Endothelial cell of umbilical vein (primary cell): ENCODE measurements at regions of chr16 and their contacts with region 1.

Region 1: GRCh38 chr16:3938848-3939624 is 58.5 kb upstream of the CREBBP start:
- DNase-seq: peak; percentile 55
- H3K4me3 ChIP-seq: peak overlapping the region in 1 of 3 experiments; percentile 29
- H3K27ac ChIP-seq: no peak overlapping the region
- H3K4me1 ChIP-seq: peaks cover 3% of the 10 kb centered on the region
- H3K27me3 ChIP-seq: peaks cover 0 to 2% of the 10 kb centered on the region in 2 experiments
- CTCF ChIP-seq: peak; percentile 90 to 97
- POLR2A ChIP-seq: no peak

Region 2: DNA sequence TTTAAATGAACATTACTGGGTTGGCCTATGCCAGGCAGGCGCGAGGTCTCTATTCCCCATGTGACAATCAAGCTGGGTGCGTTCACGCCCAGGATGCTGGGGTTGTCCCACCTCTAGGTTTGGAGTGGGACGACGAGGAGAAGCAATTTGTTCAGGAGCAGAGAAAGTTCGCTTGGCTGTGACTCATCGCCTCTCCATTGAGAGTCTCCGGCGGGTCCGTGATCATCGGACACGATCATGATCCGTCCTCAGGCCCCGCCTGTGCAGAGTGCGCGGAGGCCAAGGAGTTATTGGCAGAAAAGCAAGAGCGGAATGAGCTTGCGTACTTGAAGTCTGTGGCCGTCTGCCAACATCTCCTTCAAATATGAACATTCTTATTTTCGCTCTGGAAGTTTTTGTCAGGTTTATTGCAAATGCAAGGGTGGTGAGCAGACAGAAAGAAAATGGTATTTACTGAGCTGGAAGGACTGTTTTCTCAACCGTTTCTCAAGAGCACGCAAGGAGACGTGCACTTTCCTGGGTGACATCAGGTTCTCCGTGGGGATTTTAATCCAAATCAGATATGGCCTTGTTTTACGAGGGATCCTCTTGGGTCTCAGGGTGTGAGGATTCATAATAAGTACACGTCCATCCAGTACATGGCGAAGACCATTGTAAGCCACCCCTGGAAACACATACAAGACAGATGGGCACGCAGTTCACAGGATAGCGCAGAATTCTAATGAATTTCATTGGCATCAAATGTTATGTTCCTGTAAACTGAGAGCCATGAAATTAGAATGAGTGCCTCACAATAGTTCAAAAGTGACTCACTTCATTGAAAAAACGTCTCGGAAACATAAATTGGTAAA is 11.5 kb after region 1 on chr16:
- CTCF ChIA-PET with region 1: interaction called, 12 read pairs
- POLR2A ChIA-PET with region 1: no interaction called
- dilution Hi-C with region 1: no loop called
- intact Hi-C with region 1: no loop called
- DNase-seq: peak; percentile 79
- H3K4me3 ChIP-seq: no peak overlapping the region
- H3K27ac ChIP-seq: peak overlapping the region; percentile 26
- H3K4me1 ChIP-seq: peaks cover 19% of the 10 kb centered on the region
- H3K27me3 ChIP-seq: peaks cover 14 to 18% of the 10 kb centered on the region in 2 experiments
- CTCF ChIP-seq: no peak
- POLR2A ChIP-seq: no peak

Region 3: GRCh38 chr16:3959148-3959547 is 20.1 kb after region 1 on chr16:
- CTCF ChIA-PET with region 1: interaction called, 14 read pairs
- POLR2A ChIA-PET with region 1: no interaction called
- dilution Hi-C with region 1: no loop called
- intact Hi-C with region 1: no loop called
- DNase-seq: no peak
- H3K4me3 ChIP-seq: no peak overlapping the region
- H3K27ac ChIP-seq: no peak overlapping the region
- H3K4me1 ChIP-seq: peaks cover 5% of the 10 kb centered on the region
- H3K27me3 ChIP-seq: peaks cover 10 to 12% of the 10 kb centered on the region in 2 experiments
- CTCF ChIP-seq: no peak
- POLR2A ChIP-seq: no peak

Region 4: GRCh38 chr16:3965781-3966582 is 26.9 kb after region 1 on chr16:
- CTCF ChIA-PET with region 1: interaction called, 12 read pairs
- POLR2A ChIA-PET with region 1: no interaction called
- dilution Hi-C with region 1: no loop called
- intact Hi-C with region 1: no loop called
- DNase-seq: no peak
- H3K4me3 ChIP-seq: no peak overlapping the region
- H3K27ac ChIP-seq: no peak overlapping the region
- H3K4me1 ChIP-seq: peaks cover 5% of the 10 kb centered on the region
- H3K27me3 ChIP-seq: no peaks in the 10 kb centered on the region
- CTCF ChIP-seq: no peak
- POLR2A ChIP-seq: no peak

Region 5: GRCh38 chr16:4373863-4374742 is 435.1 kb after region 1 on chr16:
- CTCF ChIA-PET with region 1: no interaction called
- POLR2A ChIA-PET with region 1: no interaction called
- dilution Hi-C with region 1: no loop called
- intact Hi-C with region 1: no loop called
- DNase-seq: no peak
- H3K4me3 ChIP-seq: no peak overlapping the region
- H3K27ac ChIP-seq: no peak overlapping the region
- H3K4me1 ChIP-seq: peaks cover 6% of the 10 kb centered on the region
- H3K27me3 ChIP-seq: no peaks in the 10 kb centered on the region
- CTCF ChIP-seq: no peak
- POLR2A ChIP-seq: no peak